ENCODE measurements at regions of chr11 and their contacts with region 1.

Region 1: DNA sequence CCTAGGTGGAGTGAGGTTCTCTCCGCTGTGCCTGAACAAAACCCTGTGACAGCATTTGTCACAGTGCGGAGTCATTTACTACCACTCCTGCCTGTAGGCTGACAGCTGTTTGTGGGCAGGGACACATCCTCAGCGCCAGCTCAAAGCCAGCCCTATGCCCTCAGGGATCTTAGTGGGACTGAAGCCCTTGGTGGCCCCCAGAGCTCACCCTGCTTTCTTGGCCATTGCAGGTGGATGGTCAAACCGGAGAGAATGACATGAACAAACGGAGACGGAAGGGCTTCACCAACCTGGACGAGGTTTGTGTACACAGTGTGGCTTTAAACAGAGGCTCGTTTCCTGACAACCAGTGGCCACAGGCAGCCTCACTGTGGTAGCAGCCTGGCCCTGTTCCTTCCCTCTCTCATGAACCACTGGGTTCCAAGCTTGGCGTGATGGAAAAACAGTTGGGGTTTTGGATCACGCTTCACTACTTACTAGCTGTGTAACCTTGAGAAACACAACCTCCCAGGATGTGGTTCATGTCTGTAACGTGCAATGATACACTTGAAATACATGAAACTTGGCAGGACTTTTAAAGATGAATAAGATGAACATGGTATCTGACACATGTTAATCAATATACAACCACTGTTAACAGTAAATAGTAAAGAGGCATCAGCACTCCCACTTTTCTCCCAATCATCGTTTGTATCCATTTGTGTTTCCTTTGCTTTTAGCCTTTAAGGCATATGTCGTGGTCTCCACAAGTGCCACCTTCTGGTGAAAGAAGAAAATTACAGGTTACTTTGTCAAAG is 125.8 kb downstream of the MICAL2 start:
- DNase-seq: peak; percentile 64 to 79
- H3K4me3 ChIP-seq: no peak overlapping the region
- H3K27ac ChIP-seq: peak overlapping the region; percentile 77 to 86
- H3K4me1 ChIP-seq: peaks cover 6 to 91% (median 59%) of the 10 kb centered on the region in 4 donors
- H3K27me3 ChIP-seq: no peaks in the 10 kb centered on the region
- CTCF ChIP-seq: peak; percentile 68 to 82

Region 2: GRCh38 chr11:12111549-12112488 is 124.3 kb before region 1 on chr11:
- intact Hi-C with region 1: loop called (anchors 2 kb)
- DNase-seq: peak; percentile 41 to 82
- H3K4me3 ChIP-seq: peak overlapping the region; percentile 89 to 95
- H3K27ac ChIP-seq: peak overlapping the region; percentile 94 to 99
- H3K4me1 ChIP-seq: peaks cover 0 to 63% (median 36%) of the 10 kb centered on the region in 4 donors
- H3K27me3 ChIP-seq: no peaks in the 10 kb centered on the region
- CTCF ChIP-seq: peak in 1 of 2 experiments; percentile 3

Region 3: DNA sequence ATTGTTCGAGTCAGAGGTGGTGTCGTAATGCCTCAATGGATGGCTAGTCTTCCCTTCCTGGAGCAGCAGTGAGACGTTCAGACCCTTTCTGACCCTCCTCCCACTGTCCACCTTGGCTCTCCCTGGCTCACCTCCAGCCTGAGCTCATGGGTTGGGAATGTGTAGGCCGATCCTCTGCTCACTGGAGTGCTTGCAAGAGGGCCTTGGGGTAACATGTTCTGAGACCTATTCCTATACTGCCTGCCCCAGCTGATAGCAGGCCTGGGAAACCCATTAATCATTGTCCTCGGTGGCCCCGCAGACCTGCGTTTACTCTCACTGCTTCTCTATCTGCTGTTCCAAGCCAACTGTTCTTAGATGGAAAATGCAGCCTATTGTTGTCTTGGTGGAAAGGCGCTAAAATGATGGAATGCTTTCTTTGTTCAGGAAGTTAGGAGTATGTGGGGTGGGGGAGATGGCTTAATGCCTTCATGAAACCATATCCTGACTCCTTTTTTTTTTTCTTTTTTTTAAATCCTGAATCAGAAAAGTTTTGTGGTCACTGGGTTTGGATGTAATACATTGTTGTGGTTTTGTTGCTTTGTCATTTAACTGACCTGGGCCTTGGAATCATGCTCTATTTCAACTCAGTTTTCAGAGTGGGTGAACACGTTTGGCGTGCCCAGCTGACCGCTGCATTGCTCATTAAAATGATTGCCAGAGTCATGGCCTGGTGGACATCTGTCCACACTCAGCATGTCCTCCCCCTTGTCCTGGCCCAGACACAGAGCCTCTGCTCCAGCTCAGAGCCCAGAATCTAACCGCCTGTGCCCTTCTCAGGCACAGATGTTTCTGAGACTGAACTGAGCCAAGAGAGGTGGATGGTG is 53.2 kb before region 1 on chr11:
- intact Hi-C with region 1: no loop called
- DNase-seq: no peak
- H3K4me3 ChIP-seq: no peak overlapping the region
- H3K27ac ChIP-seq: peak overlapping the region; percentile 74 to 91
- H3K4me1 ChIP-seq: peaks cover 0 to 99% (median 73%) of the 10 kb centered on the region in 4 donors
- H3K27me3 ChIP-seq: no peaks in the 10 kb centered on the region
- CTCF ChIP-seq: no peak

Region 4: DNA sequence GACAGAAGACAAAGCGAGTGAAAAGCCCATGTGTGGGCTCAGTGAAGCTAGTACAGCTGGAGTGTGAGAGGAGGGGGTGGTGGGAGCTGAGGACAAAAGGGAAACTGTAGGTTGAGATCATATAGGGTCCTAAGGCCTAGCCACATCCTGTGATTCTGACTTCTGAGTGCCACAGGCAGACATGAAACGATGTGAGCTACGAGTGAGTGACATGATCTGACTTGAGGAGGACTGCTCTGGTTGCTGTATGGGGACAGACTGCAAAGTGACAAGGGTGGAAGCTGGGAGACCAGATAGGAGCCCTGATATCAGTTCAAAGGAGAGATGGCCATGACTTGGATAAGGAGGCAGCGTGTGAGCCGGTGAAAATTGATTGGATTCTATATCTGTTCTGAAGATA is 40.4 kb before region 1 on chr11:
- intact Hi-C with region 1: no loop called
- DNase-seq: peak in 1 of 2 donors; percentile 42
- H3K4me3 ChIP-seq: no peak overlapping the region
- H3K27ac ChIP-seq: peak overlapping the region in 1 of 2 donors; percentile 71
- H3K4me1 ChIP-seq: peaks cover 0 to 77% (median 50%) of the 10 kb centered on the region in 4 donors
- H3K27me3 ChIP-seq: no peaks in the 10 kb centered on the region
- CTCF ChIP-seq: no peak

Region 5: DNA sequence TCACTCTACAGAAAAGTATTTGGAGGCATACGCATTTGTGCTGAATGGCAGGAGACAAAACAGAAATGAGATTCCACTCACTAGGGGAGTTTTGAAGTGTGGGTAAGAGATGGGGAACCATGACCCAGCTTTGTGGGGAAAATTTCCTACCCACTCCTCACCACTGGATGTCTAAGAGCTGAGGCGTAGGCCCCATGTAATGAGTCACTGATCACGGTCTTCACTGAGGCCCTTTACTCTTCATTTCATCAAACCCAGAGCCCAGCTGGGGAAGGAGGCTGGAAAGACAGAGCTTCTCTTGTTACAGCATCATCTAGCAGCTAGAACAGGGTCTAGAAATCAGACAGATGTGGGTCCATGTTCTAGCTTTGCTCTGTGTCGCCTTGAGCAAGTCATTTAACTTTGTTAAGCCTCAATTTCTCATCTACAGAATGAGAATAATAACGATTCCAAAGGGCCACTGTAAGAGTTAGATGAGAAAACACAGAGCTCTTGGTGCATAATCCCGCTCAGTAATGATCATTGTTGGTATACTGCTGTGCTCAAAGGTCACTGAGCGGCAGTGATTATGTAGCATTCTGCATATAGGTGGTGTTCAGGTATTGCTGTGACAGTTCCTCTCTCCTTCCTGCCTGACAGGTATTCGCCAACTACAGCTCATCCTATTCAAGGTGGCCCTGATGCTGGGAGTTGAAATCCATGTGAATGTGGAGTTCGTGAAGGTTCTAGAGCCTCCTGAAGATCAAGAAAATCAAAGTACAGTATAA is 28.6 kb before region 1 on chr11:
- intact Hi-C with region 1: no loop called
- DNase-seq: peak; percentile 10 to 15
- H3K4me3 ChIP-seq: no peak overlapping the region
- H3K27ac ChIP-seq: peak overlapping the region; percentile 23 to 45
- H3K4me1 ChIP-seq: peaks cover 0 to 14% (median 6%) of the 10 kb centered on the region in 4 donors
- H3K27me3 ChIP-seq: no peaks in the 10 kb centered on the region
- CTCF ChIP-seq: no peak

Region 6: DNA sequence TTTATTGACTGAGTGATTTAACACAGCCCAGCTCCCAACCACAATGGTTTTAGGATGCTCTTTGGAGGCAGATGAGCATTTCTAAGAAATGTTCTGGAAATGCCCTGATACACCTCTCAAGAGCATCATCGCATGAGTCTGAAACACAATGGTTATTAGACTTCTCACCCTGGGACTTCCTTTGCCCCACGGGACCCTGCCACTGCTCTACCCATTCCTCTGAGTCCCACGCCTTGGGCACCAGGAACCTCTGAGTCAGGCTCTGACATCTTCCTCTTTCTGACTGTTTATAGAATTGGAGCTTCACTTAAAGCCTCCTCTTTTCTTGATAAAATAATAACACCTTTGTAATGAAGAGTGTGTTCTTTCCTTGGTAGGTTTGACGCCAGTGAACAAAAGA is 55.6 kb after region 1 on chr11:
- intact Hi-C with region 1: no loop called
- DNase-seq: no peak
- H3K4me3 ChIP-seq: no peak overlapping the region
- H3K27ac ChIP-seq: no peak overlapping the region
- H3K4me1 ChIP-seq: peaks cover 8 to 23% (median 20%) of the 10 kb centered on the region in 4 donors
- H3K27me3 ChIP-seq: no peaks in the 10 kb centered on the region
- CTCF ChIP-seq: no peak